Head of caudate nucleus (tissue), 42 donors: ENCODE measurements at regions of chr10 and their contacts with region 1.

Region 1: DNA sequence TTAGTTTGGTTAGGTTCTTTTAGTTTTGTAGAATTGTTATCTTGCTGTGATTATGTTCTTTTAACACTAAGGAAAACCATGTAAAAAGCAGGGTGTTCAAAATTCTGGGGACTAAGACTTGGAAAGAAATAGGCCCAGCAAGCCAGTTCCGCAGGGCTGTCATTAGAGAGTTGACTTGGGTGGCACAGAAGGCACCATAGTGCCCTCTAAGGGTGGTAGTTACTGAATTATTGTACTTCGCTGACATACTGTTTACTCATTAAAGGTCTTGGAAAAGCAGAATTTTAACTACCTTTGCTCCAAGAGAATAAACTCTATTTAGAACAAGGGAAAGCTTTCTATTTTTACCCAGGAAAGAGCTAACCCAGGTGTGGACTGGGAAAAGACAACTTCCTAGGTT is 86.5 kb downstream of the OTUD1 start:
- DNase-seq: peak in 32 of 42 donors; percentile 10 to 72 (median 44)

Region 2: GRCh38 chr10:23110722-23111516 is 414.5 kb before region 1 on chr10:
- intact Hi-C with region 1: no loop called
- DNase-seq: peak in 5 of 42 donors; percentile 16 to 40 (median 23)

Region 3: GRCh38 chr10:23314835-23315239 is 210.6 kb before region 1 on chr10:
- intact Hi-C with region 1: loop called (anchors 1 kb)
- DNase-seq: peak in 28 of 42 donors; percentile 19 to 88 (median 63)

Region 4: GRCh38 chr10:23694446-23694920 is 169.1 kb after region 1 on chr10:
- intact Hi-C with region 1: loop called (anchors 10 kb)
- DNase-seq: peak in 41 of 42 donors; percentile 17 to 83 (median 61)